ENCODE measurements at regions of chr6 and their contacts with region 1.

Region 1: GRCh38 chr6:168035098-168035660 is 37.7 kb downstream of the KIF25 start:
- DNase-seq: peak; percentile 59
- H3K4me3 Mint-ChIP-seq: peak overlapping the region; percentile 87
- H3K27ac Mint-ChIP-seq: peak overlapping the region; percentile 50
- H3K4me1 Mint-ChIP-seq: peaks cover 22% of the 10 kb centered on the region
- H3K27me3 Mint-ChIP-seq: peaks cover 14% of the 10 kb centered on the region
- CTCF ChIP-seq: no peak

Region 2: DNA sequence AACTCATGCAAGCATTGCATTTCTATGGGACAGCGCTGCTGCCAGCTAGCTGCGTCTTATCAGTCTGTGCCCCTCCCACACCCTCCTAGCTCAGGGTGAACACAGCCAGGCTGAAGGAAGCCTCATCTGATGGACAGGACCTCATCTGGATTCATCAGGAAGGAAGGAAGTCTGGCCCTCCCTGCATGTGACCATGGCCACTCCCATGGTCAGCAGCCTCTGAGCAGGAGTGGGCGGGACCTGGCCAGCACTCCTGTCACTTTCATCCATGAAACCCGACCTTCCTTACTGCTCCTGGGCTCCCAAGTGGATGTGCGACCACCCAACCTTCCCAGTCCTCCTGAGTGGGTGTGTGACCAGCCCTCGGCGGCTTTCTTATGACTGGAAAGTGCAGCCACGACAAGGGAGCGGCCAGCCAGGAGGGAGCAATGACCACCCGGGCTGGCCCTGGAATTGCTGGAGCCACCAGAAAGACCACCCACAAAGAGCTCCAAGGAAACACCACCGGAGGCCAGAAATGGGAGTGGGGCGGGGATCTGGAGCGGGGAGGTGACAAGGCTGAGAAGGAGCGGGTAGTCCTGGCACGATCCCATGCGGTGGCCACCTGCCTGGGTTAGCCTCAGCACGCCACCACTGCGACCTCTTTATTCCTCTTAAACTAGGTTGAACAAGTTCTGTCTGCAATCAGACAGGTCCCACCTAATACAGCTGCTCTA is 469.1 kb before region 1 on chr6:
- CTCF ChIA-PET with region 1: no interaction called
- intact Hi-C with region 1: no loop called
- DNase-seq: peak; percentile 50
- H3K4me3 Mint-ChIP-seq: no peak overlapping the region
- H3K27ac Mint-ChIP-seq: no peak overlapping the region
- H3K4me1 Mint-ChIP-seq: peaks cover 31% of the 10 kb centered on the region
- H3K27me3 Mint-ChIP-seq: peaks cover 13% of the 10 kb centered on the region
- CTCF ChIP-seq: no peak

Region 3: DNA sequence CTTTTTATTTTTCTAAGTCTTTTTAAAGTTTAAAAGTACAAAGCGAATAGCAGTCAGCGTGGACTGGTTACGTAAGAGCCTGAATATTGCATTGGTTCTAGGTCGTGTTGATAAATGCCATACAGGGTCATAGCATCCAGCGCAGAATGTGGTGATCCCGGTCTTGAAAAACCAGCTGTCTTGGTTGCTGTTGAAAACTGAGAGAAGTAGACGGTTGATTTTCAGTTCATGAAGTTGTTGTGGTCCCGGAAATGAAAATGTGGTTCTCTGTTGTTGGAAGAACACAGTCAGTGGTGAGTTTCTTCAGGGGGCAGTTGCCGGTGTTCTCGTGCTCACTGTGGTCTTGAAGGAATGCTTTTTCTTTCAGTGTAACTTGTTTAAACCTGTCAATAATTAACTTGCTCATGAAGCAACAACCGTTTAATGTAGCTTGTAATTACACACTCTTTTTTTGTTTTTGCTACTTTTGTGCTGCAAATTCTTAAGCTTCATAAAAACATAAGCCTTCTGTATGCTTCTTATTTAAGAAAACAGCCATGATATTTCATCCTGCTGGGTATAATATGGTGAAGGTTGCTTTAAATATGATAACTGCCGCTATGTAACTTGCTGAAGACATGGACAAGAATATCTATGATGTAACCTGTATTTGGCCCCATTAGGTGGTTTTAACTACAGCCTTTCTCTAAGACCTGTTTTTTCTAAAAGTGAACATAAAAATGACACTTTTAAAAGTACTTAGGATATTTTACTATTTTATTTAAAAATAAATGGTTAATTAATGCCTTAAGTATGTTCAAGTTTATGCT is 102.5 kb before region 1 on chr6:
- CTCF ChIA-PET with region 1: no interaction called
- intact Hi-C with region 1: loop called (anchors 10 kb)
- DNase-seq: peak; percentile 49
- H3K4me3 Mint-ChIP-seq: peak overlapping the region; percentile 60
- H3K27ac Mint-ChIP-seq: peak overlapping the region; percentile 79
- H3K4me1 Mint-ChIP-seq: peaks cover 37% of the 10 kb centered on the region
- H3K27me3 Mint-ChIP-seq: no peaks in the 10 kb centered on the region
- CTCF ChIP-seq: no peak

Region 4: DNA sequence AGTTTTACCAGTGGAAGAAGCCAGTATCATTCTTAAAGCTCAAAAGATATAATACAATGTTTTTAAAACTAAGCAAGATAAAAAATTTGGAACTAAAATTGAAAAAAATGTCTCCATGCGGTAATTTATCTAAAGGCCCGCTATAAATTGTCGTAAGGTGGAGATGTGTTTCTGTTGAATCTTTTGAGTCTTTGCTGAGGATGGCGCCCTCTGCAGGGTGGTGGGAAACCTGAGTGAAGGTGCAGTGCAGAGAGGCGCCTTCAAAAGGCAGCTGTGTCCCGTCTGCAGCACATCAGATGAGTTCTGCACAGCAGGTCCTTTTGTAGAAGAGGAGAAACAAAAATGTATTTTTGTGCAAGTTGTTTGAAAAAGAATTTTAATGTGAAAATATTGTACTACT is 67.1 kb before region 1 on chr6:
- CTCF ChIA-PET with region 1: no interaction called
- intact Hi-C with region 1: loop called (anchors 10 kb)
- DNase-seq: peak; percentile 51
- H3K4me3 Mint-ChIP-seq: no peak overlapping the region
- H3K27ac Mint-ChIP-seq: no peak overlapping the region
- H3K4me1 Mint-ChIP-seq: peaks cover 28% of the 10 kb centered on the region
- H3K27me3 Mint-ChIP-seq: no peaks in the 10 kb centered on the region
- CTCF ChIP-seq: peak; percentile 46

Region 5: DNA sequence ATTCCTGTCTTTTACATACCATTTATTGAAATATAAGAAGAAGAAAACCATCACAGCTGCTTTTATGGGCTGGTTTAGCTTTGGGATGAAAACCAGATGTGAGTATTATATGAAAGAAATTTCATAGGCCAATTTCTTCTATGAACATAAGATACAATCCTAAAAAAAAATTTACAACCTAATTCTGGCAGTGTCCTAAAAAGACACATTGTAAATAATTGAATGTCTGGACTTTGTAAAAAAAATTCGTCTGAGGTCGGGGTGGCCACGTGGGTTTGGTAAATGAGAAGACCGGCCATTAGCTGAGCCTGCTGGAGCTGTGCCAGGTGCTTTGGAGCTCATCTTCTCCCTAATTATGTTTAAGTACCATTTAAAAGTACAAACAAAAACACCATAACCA is 257.6 kb after region 1 on chr6:
- CTCF ChIA-PET with region 1: no interaction called
- intact Hi-C with region 1: no loop called
- DNase-seq: no peak
- H3K4me3 Mint-ChIP-seq: no peak overlapping the region
- H3K27ac Mint-ChIP-seq: no peak overlapping the region
- H3K4me1 Mint-ChIP-seq: no peaks in the 10 kb centered on the region
- H3K27me3 Mint-ChIP-seq: peaks cover 61% of the 10 kb centered on the region
- CTCF ChIP-seq: no peak

Measured in Calu3 (cell line).